ENCODE measurements at regions of chr17 and their contacts with region 1.

Region 1: DNA sequence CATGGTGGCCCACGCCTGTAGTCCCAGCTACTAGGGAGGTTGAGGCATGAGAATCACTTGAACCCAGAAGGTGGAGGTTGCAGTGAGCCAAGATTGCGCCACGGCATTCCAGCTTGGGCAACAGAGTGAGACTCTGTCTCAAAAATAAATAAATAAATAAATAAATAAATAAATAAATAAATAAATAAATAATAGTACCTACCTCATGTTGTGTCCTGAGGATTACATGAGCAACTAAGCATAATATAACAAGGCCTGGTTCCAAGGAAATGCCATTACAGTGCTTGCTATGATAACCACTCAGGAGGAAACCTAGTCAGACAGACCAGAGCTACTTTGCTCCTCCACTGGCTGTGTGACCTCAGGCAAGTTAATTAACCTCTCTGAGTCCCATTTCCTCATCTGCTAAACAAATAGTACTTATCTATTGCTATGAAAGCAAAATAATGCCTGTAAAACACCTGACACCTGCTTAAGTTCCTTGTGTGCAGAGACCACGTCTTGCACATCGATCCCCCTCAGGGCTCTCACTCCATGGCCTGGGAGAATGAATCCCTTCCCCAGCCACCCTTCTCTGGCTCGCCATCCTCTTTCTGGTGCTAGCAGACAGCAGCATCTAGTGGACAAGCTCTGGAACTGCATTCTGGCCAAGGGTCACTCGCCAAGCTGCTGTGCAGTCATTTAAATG is 7.5 kb downstream of the EPOP start:
- DNase-seq: no peak
- H3K4me3 ChIP-seq: no peak overlapping the region
- H3K27me3 ChIP-seq: peaks cover 33% of the 10 kb centered on the region
- CTCF ChIP-seq: peak; percentile 100

Region 2: DNA sequence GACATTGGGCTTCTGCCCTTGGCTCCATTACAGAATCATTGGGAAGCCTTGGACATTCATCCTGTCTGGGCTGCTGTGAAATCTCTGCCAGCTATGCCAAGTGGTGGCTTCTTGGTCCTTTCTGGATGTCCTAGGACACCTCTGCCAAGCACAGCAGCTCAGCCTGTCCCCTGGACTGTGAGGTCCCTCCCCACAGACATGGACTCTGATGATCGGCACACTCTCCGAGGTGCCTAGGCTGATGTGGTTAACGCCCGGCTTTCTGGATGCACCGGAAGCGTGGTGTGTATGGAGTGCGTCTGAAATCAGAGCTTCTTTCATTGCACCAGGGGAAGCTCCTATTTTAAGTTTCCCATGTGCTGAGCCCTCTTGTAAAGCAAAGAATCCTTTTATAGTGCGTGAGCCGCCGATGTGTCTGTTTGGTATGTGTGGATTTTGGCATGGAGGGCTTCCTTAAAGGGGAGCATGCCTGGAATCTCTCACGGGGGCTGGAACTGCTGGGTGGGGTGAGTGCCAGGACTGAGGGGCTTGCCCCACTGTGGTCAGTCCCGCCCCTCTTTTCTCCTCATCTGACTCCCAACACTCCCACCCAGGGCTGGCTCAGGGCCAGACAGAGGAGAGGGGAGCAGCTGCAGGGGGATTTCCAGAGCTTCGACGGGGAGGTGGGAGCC is 245.9 kb before region 1 on chr17:
- CTCF ChIA-PET with region 1: interaction called, 20 read pairs
- POLR2A ChIA-PET with region 1: no interaction called
- DNase-seq: peak; percentile 65
- H3K4me3 ChIP-seq: no peak overlapping the region
- H3K27me3 ChIP-seq: peaks cover 25% of the 10 kb centered on the region
- CTCF ChIP-seq: no peak

Region 3: GRCh38 chr17:38539386-38539785 is 127.9 kb before region 1 on chr17:
- CTCF ChIA-PET with region 1: interaction called, 11 read pairs
- POLR2A ChIA-PET with region 1: no interaction called
- DNase-seq: no peak
- H3K4me3 ChIP-seq: no peak overlapping the region
- H3K27me3 ChIP-seq: peaks cover 17% of the 10 kb centered on the region
- CTCF ChIP-seq: no peak

Region 4: DNA sequence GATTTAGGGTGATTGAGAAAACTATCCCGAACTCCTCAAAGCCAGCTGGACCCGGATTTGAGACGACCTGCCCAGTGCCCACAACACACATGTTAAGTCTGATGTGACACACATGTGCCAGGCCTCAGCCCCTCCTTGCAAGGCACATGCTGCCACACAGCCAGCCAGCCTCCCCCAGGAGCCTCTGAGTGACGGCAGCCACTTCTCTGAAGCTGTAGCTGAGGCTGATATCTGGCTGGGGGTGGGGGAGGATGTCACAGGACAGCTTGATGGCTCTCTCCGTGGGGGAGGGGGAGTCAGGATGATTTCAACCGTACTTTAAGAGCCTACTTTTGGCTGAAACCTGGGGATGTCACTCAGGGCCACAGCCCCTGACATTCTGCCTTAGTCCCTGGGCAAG is 102.4 kb before region 1 on chr17:
- CTCF ChIA-PET with region 1: interaction called, 51 read pairs
- POLR2A ChIA-PET with region 1: no interaction called
- DNase-seq: no peak
- H3K4me3 ChIP-seq: no peak overlapping the region
- H3K27me3 ChIP-seq: peaks cover 28% of the 10 kb centered on the region
- CTCF ChIP-seq: no peak

Region 5: DNA sequence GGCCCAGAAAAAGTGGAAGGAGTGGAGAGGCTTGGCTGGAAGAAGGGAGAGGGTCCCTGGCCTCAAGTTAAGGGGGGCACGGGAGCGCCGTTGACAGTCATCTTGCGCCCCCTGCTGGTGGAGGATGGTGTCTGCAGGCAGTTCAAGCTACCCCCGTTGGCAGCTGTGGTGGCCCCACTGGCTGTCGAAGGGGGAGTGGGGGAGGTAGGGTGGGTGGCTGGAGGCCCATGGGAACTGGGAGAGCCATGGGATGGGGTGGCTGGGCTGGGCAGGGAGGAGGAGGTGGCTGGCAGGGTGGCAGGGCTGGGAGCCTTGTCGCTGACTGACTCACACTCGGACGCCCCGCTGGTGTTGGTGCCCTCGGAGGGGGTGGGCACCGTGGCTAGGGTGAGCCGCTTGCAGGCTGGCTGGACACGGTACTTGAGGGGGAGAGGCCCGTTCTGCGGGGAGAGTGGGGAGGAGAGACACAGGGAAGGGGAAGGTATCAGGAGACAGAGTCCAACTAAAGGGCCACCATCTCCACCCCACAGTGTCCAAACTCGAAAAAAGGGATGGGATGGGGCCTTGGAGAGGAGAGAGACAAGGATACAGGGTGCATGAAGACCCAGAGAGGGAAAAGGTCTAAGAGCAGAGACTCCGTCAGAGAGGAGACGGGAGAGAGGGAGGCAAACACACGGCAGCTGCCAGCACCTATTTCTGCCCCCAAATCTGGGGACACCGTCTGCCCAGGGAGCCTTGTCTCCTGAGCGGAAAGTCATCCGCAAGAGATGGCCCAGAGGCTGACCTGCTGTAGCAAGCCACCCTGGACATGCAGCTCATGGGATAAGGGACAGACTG is 68.1 kb after region 1 on chr17:
- CTCF ChIA-PET with region 1: interaction called, 15 read pairs
- POLR2A ChIA-PET with region 1: no interaction called
- DNase-seq: no peak
- H3K4me3 ChIP-seq: no peak overlapping the region
- H3K27me3 ChIP-seq: no peaks in the 10 kb centered on the region
- CTCF ChIP-seq: peak; percentile 93

Region 6: DNA sequence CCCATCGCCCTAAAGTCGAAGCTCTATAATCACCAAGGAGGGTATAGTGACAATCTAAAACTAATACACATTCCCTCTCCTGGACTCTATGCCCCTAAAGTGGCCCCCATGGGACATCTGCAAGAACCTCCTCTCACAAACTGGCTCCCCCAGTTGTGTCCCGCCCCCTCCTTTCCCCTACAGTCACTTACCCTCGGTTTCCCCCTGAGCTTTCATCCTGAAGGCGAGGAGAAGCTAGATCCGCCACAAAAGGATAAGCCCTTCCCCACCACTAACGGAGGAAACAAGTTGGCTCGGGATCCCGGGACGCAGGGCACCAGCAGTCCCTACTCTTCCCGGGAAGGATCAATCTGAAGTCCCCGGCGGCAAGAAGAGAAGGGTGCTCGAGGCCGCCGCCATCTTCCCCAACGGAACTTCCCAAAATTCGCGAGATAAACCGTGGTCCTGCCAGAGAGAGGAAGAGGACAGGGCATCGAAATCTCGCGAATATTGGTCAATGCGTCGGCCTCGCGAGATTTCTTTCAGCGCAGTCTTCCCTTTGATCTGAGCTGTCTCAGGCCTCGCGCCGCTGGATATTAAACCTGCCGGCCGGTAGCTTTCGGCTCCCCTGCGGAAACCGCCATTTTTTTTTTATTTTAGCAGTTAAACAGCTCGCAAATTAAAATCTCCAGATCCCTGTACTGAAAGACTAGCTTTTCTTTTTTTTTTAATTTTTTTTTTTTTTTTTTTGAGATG is 783.8 kb after region 1 on chr17 and contains the start of gene MED1:
- CTCF ChIA-PET with region 1: no interaction called
- POLR2A ChIA-PET with region 1: no interaction called
- DNase-seq: peak; percentile 91
- H3K4me3 ChIP-seq: peak within 1 kb of the TSS; percentile 96
- H3K27me3 ChIP-seq: no peaks in the 10 kb centered on the region
- CTCF ChIP-seq: no peak
- polyA plus RNA-seq, gene MED1: 22.9 and 33.3 TPM in 2 replicates

Measured in BJ (cell line).